PC-9 (cell line): ENCODE measurements at regions of chr11 and their contacts with region 1.

Region 1: GRCh38 chr11:130827451-130828377 is 88.6 kb downstream of the SNX19 start:
- DNase-seq: peak; percentile 51 to 55
- H3K4me3 ChIP-seq: no peak overlapping the region
- H3K27ac ChIP-seq: no peak overlapping the region
- H3K4me1 ChIP-seq: 0 out of 2 replicates have a peak, but pooled peaks cover 4% of the 10 kb centered on the region
- H3K27me3 ChIP-seq: no peaks in the 10 kb centered on the region
- CTCF ChIP-seq: peak; percentile 70

Region 2: GRCh38 chr11:130295657-130296056 is 532.1 kb before region 1 on chr11:
- CTCF ChIA-PET with region 1: interaction called, 14 read pairs
- POLR2A ChIA-PET with region 1: no interaction called
- intact Hi-C with region 1: no loop called
- DNase-seq: no peak
- H3K4me3 ChIP-seq: no peak overlapping the region
- H3K27ac ChIP-seq: no peak overlapping the region
- H3K4me1 ChIP-seq: no peaks in the 10 kb centered on the region
- H3K27me3 ChIP-seq: no peaks in the 10 kb centered on the region
- CTCF ChIP-seq: no peak

Region 3: GRCh38 chr11:130527636-130528297 is 299.9 kb before region 1 on chr11:
- CTCF ChIA-PET with region 1: no interaction called
- POLR2A ChIA-PET with region 1: no interaction called
- intact Hi-C with region 1: loop called (anchors 5 kb)
- DNase-seq: peak; percentile 50 to 70
- H3K4me3 ChIP-seq: no peak overlapping the region
- H3K27ac ChIP-seq: peak overlapping the region; percentile 55
- H3K4me1 ChIP-seq: peaks cover 48% of the 10 kb centered on the region
- H3K27me3 ChIP-seq: no peaks in the 10 kb centered on the region
- CTCF ChIP-seq: no peak

Region 4: GRCh38 chr11:130671801-130672700 is 155.7 kb before region 1 on chr11:
- CTCF ChIA-PET with region 1: no interaction called
- POLR2A ChIA-PET with region 1: no interaction called
- intact Hi-C with region 1: loop called (anchors 10 kb)
- DNase-seq: no peak
- H3K4me3 ChIP-seq: no peak overlapping the region
- H3K27ac ChIP-seq: no peak overlapping the region
- H3K4me1 ChIP-seq: peaks cover 3% of the 10 kb centered on the region
- H3K27me3 ChIP-seq: no peaks in the 10 kb centered on the region
- CTCF ChIP-seq: no peak

Region 5: GRCh38 chr11:130806746-130807145 is 21.0 kb before region 1 on chr11:
- CTCF ChIA-PET with region 1: no interaction called
- POLR2A ChIA-PET with region 1: no interaction called
- intact Hi-C with region 1: no loop called
- DNase-seq: no peak
- H3K4me3 ChIP-seq: no peak overlapping the region
- H3K27ac ChIP-seq: no peak overlapping the region
- H3K4me1 ChIP-seq: no peaks in the 10 kb centered on the region
- H3K27me3 ChIP-seq: no peaks in the 10 kb centered on the region
- CTCF ChIP-seq: no peak

Region 6: DNA sequence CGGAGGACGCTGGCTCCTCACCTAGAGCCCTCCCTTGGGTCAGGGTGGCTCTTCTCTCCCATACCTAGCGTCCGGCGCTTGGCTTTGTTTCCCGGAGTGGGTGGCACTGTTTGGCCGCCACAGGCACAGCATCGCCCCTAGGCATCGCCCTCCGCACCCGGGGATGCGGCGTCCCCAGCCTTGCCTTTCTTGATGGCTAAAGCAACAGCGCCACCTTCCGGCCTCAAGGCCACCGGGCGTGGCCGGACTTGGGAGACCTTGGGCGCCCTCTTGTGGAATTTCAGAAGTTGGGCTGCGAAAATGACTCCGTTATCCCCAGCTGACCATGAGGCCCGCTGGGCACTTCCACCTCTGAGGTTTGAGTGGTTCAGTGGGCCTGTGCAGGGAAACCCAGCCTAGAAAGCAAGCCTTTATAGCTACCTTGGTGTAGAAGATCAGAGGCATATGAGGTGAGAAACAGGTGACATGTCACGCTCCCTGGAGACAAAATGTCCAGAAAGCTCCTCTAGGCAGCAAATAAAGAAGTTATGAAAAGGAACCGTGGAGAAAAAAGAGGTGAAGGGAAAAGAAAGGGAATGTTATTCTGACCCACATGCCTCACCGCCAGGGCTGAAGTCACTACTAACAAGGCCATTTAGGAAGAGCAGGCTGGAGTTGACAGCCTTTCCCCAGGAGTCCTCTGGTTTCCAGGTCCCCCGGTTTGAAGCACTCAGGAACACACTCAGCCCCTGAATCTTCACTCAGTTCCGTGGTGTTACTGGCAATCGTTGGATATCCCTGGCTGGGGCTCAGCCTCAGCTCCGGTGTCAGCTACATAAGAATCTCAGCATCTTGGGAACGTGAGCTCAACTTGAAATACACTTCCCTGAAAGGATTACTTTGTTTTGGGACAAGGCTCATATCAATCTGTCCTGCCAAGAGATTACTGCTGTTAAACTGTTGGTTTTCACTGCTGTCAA is 34.5 kb after region 1 on chr11:
- CTCF ChIA-PET with region 1: interaction called, 9 read pairs
- POLR2A ChIA-PET with region 1: no interaction called
- intact Hi-C with region 1: loop called (anchors 2 kb)
- DNase-seq: peak; percentile 74 to 79
- H3K4me3 ChIP-seq: no peak overlapping the region
- H3K27ac ChIP-seq: no peak overlapping the region
- H3K4me1 ChIP-seq: no peaks in the 10 kb centered on the region
- H3K27me3 ChIP-seq: no peaks in the 10 kb centered on the region
- CTCF ChIP-seq: peak; percentile 100